ENCODE measurements at regions of chr5 and their contacts with region 1.

Region 1: DNA sequence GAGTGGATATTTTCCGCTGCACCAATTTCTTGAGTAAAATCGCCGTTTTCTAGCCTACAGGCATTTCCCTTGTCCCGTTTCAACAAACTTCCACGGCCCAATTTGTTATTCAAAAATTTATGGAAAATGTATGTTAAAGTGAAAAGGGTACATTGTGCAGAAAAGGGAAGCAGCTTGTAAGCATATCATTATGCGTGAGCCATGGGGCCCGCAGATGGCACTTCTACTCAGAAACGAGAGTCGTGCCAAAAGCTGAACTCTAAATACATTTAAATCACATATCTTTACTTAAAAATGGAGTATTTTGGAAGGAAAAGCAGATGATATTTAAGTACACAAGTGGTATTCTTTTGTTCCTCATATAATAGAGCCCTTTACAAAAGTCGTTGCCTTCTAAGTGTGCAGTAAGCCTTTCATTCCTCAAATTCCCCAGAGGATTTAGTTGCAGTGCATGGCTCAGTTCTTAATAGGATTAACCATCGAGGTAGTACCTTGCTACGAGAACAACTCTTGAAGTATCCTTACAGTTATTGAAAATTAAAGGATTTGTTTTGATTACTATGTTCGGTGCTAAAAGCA is 1227.2 kb upstream of the WWC1 start:
- DNase-seq: no peak
- H3K4me3 ChIP-seq: no peak overlapping the region
- H3K27ac ChIP-seq: no peak overlapping the region
- H3K4me1 ChIP-seq: no peaks in the 10 kb centered on the region
- H3K27me3 ChIP-seq: no peaks in the 10 kb centered on the region
- CTCF ChIP-seq: no peak
- POLR2A ChIP-seq: no peak

Region 2: GRCh38 chr5:165620394-165620793 is 1443.9 kb before region 1 on chr5:
- intact Hi-C with region 1: loop called (anchors 10 kb)
- DNase-seq: no peak
- H3K4me3 ChIP-seq: no peak overlapping the region
- H3K27ac ChIP-seq: no peak overlapping the region
- H3K4me1 ChIP-seq: no peaks in the 10 kb centered on the region
- H3K27me3 ChIP-seq: no peaks in the 10 kb centered on the region
- CTCF ChIP-seq: no peak
- POLR2A ChIP-seq: no peak

Measured in prostate gland (tissue), 2 donors.